ENCODE measurements at regions of chr17 and their contacts with region 1.

Region 1: DNA sequence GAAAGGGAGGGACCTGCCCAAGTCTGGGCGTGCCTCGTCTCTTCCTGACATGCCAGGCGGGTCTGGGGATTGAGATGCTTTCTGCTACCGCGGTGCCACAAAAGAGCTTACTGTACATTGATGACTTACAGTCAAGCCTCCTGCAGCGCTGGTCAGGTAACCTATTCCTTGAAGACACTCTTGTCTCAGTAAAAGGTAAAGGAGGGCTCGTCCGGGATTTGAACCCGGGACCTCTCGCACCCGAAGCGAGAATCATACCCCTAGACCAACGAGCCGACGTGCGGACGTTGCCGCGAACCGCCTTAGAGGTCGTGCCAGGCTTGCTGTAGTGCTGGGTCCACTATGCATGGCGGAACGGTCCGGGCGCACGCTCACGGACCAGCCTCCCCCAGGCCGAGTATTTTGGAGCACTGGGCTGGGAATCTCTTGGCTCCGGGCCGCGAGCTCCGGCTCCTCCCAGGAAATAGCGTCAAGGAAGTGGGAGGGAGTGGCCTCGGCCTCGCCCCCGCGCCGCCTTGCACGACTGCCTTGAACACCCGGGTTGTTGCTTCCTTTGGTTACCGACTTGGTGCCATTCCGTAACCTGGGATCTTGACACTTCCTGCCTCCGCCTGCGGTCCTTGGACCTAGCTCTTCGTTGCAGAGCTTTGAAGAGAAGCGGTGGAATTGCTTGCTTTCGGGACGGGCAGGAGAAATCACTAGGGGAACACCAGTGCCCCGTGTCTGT is 12.4 kb upstream of the AURKB start:
- DNase-seq: peak; percentile 96
- H3K4me3 ChIP-seq: peak overlapping the region; percentile 85
- H3K27ac ChIP-seq: peak overlapping the region; percentile 95
- H3K4me1 ChIP-seq: peaks cover 13% of the 10 kb centered on the region
- H3K27me3 ChIP-seq: no peaks in the 10 kb centered on the region
- CTCF ChIP-seq: no peak

Region 2: GRCh38 chr17:7887482-7888183 is 335.2 kb before region 1 on chr17:
- CTCF ChIA-PET with region 1: no interaction called
- POLR2A ChIA-PET with region 1: no interaction called
- intact Hi-C with region 1: loop called (anchors 5 kb)
- DNase-seq: peak; percentile 99
- H3K4me3 ChIP-seq: peak overlapping the region; percentile 87
- H3K27ac ChIP-seq: peak overlapping the region; percentile 96
- H3K4me1 ChIP-seq: peaks cover 37% of the 10 kb centered on the region
- H3K27me3 ChIP-seq: no peaks in the 10 kb centered on the region
- CTCF ChIP-seq: no peak

Region 3: GRCh38 chr17:8138672-8139371 is 84.0 kb before region 1 on chr17:
- CTCF ChIA-PET with region 1: no interaction called
- POLR2A ChIA-PET with region 1: no interaction called
- intact Hi-C with region 1: loop called (anchors 1 kb)
- DNase-seq: peak; percentile 99
- H3K4me3 ChIP-seq: peak overlapping the region; percentile 55
- H3K27ac ChIP-seq: peak overlapping the region; percentile 87
- H3K4me1 ChIP-seq: no peaks in the 10 kb centered on the region
- H3K27me3 ChIP-seq: no peaks in the 10 kb centered on the region
- CTCF ChIP-seq: peak; percentile 91

Region 4: GRCh38 chr17:8209909-8210760 is 12.7 kb before region 1 on chr17 and contains the start of gene AURKB:
- CTCF ChIA-PET with region 1: no interaction called
- POLR2A ChIA-PET with region 1: interaction called, 6 read pairs
- intact Hi-C with region 1: loop called (anchors 1 kb)
- DNase-seq: peak; percentile 99
- H3K4me3 ChIP-seq: peak within 1 kb of the TSS; percentile 82
- H3K27ac ChIP-seq: peak within 1 kb of the TSS; percentile 94
- H3K4me1 ChIP-seq: peaks cover 11% of the 10 kb centered on the region
- H3K27me3 ChIP-seq: no peaks in the 10 kb centered on the region
- CTCF ChIP-seq: no peak
- total RNA-seq, gene AURKB: 209 and 230 TPM in 2 replicates

Region 5: GRCh38 chr17:8277317-8277716 is 54.5 kb after region 1 on chr17:
- CTCF ChIA-PET with region 1: no interaction called
- POLR2A ChIA-PET with region 1: no interaction called
- intact Hi-C with region 1: no loop called
- DNase-seq: no peak
- H3K4me3 ChIP-seq: no peak overlapping the region
- H3K27ac ChIP-seq: no peak overlapping the region
- H3K4me1 ChIP-seq: no peaks in the 10 kb centered on the region
- H3K27me3 ChIP-seq: no peaks in the 10 kb centered on the region
- CTCF ChIP-seq: no peak

Region 6: DNA sequence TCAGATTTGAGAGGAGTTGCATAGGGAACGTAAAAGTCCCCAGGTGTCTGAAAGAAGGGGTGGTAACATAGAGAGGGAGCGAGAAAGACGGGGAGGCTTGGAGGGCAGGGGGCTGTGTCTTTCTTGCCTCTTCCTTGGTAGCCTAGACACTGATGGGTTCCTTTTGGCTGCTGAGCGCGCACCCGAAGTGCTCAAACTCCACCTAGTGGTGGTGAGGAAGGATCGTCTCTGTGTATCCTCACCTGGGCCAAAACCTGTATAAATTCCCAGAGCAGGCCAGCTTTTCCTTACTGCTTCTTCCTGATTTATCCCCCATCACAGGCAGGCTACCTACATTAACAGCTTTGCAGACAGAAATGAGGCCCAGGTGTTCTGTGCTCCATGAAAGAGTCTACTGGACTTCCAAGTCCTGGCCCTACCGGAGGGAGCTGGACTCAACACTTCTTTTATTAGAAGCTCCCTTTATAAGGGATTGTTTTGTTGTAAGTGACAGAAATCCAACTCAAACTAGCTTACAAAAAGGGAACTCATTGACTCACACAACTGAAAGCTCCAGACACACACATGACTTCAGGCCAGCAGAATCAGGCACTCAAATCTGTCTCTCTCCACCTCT is 77.9 kb after region 1 on chr17:
- CTCF ChIA-PET with region 1: no interaction called
- POLR2A ChIA-PET with region 1: no interaction called
- intact Hi-C with region 1: loop called (anchors 2 kb)
- DNase-seq: peak; percentile 83
- H3K4me3 ChIP-seq: no peak overlapping the region
- H3K27ac ChIP-seq: no peak overlapping the region
- H3K4me1 ChIP-seq: no peaks in the 10 kb centered on the region
- H3K27me3 ChIP-seq: no peaks in the 10 kb centered on the region
- CTCF ChIP-seq: peak; percentile 87

Measured in A673 (cell line).